ENCODE measurements at regions of chr15 and their contacts with region 1.

Region 1: DNA sequence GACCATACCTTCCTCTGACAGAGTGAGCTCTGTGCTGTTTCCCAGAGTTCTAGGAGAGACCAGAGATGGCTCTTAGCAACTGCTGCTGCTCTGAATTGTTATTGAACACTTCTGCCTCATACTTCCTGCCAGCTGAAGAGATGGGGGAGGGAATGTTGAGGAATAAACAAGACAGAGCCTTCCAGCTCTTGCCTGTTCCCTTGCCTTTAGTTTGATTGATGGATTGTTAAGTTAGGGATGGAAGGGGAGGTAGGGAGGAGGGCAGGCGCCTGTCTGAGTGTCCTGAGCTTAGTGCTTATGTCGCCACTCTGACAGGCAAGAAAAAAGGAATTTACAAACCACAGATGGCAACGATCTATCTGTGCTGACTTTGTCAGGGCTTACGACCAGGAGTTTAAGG is 42.8 kb downstream of the ZNF609 start:
- H3K4me3 Mint-ChIP-seq: peak overlapping the region; percentile 41
- H3K27ac Mint-ChIP-seq: peak overlapping the region; percentile 81
- H3K4me1 Mint-ChIP-seq: peaks cover 75% of the 10 kb centered on the region
- H3K27me3 Mint-ChIP-seq: no peaks in the 10 kb centered on the region

Region 2: DNA sequence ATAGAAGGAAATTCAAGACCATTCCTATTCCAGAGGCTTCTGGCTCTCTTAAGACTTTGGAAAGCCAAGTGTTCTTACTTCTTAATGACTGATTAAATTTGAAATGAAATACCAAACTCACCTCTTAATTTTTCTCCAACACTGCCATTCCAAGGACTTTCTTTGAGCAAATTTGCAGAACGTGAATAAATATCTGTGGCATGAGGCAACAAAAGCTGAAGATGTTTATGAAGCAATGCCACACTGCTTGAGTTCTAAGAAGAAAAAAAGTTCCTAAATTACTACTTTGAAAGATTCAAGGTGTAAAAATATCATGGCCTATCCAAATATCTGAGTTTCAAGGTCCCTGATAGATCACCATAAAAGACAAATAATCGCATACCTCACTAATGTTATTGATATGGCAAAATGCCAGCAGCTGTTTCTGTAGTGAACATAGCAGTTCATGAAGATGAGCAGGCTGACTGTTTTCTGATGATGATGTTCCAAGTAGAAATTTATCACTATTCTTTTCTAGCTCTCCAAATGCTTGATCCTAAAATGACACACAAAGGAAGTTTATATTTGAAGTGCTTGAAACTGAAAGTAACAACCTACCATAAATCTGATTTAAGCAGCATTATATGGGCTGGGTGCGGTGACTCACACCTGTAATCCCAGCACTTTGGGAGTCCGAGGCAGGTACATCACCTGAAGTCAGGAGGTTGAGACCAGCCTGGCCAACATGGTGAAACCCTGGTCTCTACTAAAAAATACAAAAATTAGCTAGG is 773.9 kb before region 1 on chr15:
- intact Hi-C with region 1: no loop called
- H3K4me3 Mint-ChIP-seq: no peak overlapping the region
- H3K27ac Mint-ChIP-seq: no peak overlapping the region
- H3K4me1 Mint-ChIP-seq: no peaks in the 10 kb centered on the region
- H3K27me3 Mint-ChIP-seq: no peaks in the 10 kb centered on the region

Region 3: GRCh38 chr15:64460206-64460734 is 42.9 kb before region 1 on chr15 and contains the start of gene ZNF609:
- intact Hi-C with region 1: loop called (anchors 5 kb)
- H3K4me3 Mint-ChIP-seq: peak within 1 kb of the TSS; percentile 85
- H3K27ac Mint-ChIP-seq: peak within 1 kb of the TSS; percentile 84
- H3K4me1 Mint-ChIP-seq: peaks cover 72% of the 10 kb centered on the region
- H3K27me3 Mint-ChIP-seq: no peaks in the 10 kb centered on the region

Measured in dendritic cell treated with granulocyte-macrophage colony-stimulating factor and Interleukin-4, amounts not matched to agents 40 ng/mL and 50 ng/mL, for 4 days (primary cell).